ENCODE measurements at regions of chr10 and their contacts with region 1.

Region 1: GRCh38 chr10:72364239-72364777 is 9.6 kb upstream of the DNAJB12 start:
- DNase-seq: peak; percentile 78 to 93
- ATAC-seq: peak; percentile 97 to 100 (median 100)
- H3K4me3 ChIP-seq: no peak overlapping the region
- H3K4me3 Mint-ChIP-seq: peak overlapping the region; percentile 53
- H3K27ac ChIP-seq: peak overlapping the region; percentile 8
- H3K27ac Mint-ChIP-seq: peak overlapping the region in 1 of 2 donors; percentile 57
- H3K4me1 ChIP-seq: peaks cover 15% of the 10 kb centered on the region
- H3K4me1 Mint-ChIP-seq: peaks cover 20 to 23% of the 10 kb centered on the region in 2 donors
- H3K27me3 ChIP-seq: no peaks in the 10 kb centered on the region
- H3K27me3 Mint-ChIP-seq: peaks cover 7 to 8% of the 10 kb centered on the region in 2 donors
- CTCF ChIP-seq: peak; percentile 89

Region 2: DNA sequence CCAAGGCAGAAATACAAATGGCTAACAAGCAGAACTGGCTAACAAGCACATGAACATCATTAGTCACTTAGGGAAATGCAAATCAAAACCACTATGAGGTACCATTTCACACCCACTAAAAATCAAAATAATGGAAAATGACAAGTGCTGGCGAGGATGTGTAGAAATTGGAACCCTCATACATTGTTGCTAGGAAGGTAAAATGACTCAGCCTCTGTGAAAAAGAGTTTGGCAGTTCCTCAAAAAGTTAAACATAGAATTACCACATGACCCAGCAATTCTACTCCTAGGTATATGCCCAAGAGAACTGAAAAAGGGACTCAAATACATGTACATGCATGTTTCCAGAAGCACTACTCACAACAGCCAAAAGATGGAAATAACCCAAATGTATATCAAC is 201.3 kb before region 1 on chr10:
- intact Hi-C with region 1: no loop called
- DNase-seq: no peak
- ATAC-seq: no peak
- H3K4me3 ChIP-seq: no peak overlapping the region
- H3K4me3 Mint-ChIP-seq: no peak overlapping the region
- H3K27ac ChIP-seq: no peak overlapping the region
- H3K27ac Mint-ChIP-seq: no peak overlapping the region
- H3K4me1 ChIP-seq: no peaks in the 10 kb centered on the region
- H3K4me1 Mint-ChIP-seq: no peaks in the 10 kb centered on the region
- H3K27me3 ChIP-seq: no peaks in the 10 kb centered on the region
- H3K27me3 Mint-ChIP-seq: no peaks in the 10 kb centered on the region
- CTCF ChIP-seq: no peak

Region 3: DNA sequence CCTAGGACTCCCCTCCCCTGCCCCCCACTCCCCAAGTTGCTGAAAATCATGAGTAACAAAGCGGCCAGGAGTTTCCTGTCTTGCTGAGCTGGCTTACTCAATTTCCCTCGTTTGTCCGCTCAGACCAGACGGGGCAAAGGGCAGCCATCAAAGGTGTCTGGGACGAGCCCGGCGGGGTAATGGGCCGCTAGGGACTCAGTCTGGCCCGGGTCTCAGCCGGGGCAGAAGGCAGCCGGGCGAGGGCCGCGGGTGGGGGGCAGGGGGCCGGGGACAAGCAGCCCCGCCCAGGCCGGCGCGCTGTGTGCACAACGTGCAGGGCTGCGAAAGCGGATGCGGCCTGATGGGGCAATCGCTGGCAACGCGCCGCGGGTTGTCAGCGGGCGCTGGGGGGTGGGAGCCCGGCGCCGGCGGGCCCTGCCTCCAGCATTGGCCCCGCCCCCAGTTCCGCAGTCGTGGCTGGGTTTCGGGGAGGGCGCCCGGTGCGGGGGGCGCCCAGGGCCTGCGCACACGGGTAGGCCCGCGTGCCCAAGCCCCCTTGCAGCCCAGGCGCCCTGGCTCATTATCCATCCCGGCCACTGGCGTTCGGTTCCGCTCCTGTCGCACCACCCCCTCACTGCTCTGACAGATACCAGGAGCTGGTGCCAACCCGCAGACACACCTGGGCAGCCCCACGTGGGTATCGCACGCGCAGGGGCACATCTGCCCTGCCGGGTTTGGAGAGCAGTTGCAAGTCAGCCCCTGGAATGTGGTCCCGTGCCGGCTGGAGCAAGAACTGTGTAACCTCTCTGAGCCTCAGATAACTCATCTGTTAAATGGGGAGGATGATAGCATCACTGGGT is 44.7 kb before region 1 on chr10:
- intact Hi-C with region 1: no loop called
- DNase-seq: peak; percentile 89 to 95
- ATAC-seq: peak; percentile 68 to 87 (median 83)
- H3K4me3 ChIP-seq: peak overlapping the region; percentile 37
- H3K4me3 Mint-ChIP-seq: peak overlapping the region; percentile 75
- H3K27ac ChIP-seq: peak overlapping the region; percentile 95
- H3K27ac Mint-ChIP-seq: peak overlapping the region; percentile 85 to 97
- H3K4me1 ChIP-seq: peaks cover 85% of the 10 kb centered on the region
- H3K4me1 Mint-ChIP-seq: peaks cover 52 to 69% of the 10 kb centered on the region in 2 donors
- H3K27me3 ChIP-seq: no peaks in the 10 kb centered on the region
- H3K27me3 Mint-ChIP-seq: no peaks in the 10 kb centered on the region
- CTCF ChIP-seq: no peak

Region 4: DNA sequence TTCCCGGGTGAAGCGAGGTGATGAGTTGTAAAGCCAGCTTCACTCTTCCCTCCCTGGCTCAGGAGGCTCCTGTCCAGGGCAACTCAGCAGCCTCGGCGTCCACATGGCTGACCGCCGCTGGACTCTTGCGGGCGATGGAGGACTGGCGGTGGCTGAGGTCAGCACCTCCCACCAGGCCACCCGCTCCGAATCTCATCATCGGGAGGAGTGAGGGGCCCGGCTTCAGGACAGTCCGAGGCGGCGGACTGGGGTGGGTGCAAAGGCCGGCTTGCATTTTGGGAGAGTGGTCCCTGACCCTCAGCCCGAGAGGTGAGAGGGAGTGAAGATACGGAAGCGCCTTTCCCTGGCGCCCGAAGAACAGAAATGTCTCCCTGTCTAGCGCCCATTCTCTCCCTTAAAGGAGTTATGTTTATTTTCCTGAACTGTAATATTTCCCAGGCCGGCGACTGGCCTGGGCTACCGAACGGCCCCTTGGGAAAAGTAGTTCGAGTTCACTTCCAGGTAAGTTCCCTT is 10.3 kb before region 1 on chr10:
- intact Hi-C with region 1: no loop called
- DNase-seq: no peak
- ATAC-seq: peak; percentile 41 to 58 (median 49)
- H3K4me3 ChIP-seq: peak overlapping the region; percentile 80
- H3K4me3 Mint-ChIP-seq: peak overlapping the region; percentile 96
- H3K27ac ChIP-seq: peak overlapping the region; percentile 90
- H3K27ac Mint-ChIP-seq: peak overlapping the region; percentile 92 to 94
- H3K4me1 ChIP-seq: peaks cover 21% of the 10 kb centered on the region
- H3K4me1 Mint-ChIP-seq: peaks cover 42 to 53% of the 10 kb centered on the region in 2 donors
- H3K27me3 ChIP-seq: no peaks in the 10 kb centered on the region
- H3K27me3 Mint-ChIP-seq: no peaks in the 10 kb centered on the region
- CTCF ChIP-seq: no peak

Region 5: DNA sequence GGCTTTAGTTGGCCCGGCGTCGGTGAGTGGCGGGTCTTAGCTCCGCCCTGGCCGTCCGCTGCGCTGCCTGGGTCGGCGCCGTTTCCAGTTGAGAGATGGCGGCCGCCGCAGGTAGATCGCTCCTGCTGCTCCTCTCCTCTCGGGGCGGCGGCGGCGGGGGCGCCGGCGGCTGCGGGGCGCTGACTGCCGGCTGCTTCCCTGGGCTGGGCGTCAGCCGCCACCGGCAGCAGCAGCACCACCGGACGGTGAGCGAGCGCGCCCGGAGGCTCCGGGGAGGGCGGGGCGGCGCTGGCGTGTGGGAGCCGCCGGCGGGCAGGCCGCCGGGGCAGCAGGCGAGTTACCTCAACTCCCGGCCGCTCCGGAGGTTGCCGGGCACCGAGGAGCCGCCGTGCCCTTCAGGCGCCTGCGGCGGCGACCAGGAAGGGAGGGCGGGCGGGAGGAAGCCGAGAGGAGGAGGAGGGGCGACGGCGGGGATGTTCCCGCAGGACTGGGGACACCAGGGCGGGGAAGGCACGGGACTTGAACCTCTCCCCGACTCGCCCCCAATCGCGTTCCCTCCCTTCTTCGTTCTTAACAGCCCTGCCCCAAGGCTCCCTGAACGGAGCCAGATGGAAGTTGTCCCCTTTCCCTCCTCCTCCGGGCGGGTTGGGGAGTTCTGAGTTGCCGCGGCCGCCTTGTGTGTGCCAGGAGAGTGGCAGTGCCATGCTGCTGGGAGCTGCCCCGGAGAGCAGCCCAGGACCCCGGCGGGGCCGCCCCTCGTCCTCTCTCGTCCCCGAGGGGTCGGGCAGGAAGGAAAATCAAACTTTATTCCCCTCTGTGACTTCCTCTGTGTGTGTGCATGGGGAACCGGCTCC is 328.0 kb after region 1 on chr10 and contains the start of gene MCU:
- intact Hi-C with region 1: loop called (anchors 2 kb)
- DNase-seq: peak; percentile 86 to 96
- ATAC-seq: peak; percentile 97 to 99 (median 97)
- H3K4me3 ChIP-seq: peak within 1 kb of the TSS; percentile 90
- H3K4me3 Mint-ChIP-seq: peak within 1 kb of the TSS; percentile 86
- H3K27ac ChIP-seq: peak within 1 kb of the TSS; percentile 66
- H3K27ac Mint-ChIP-seq: peak within 1 kb of the TSS; percentile 66 to 80
- H3K4me1 ChIP-seq: peaks cover 7% of the 10 kb centered on the region
- H3K4me1 Mint-ChIP-seq: peaks cover 26 to 28% of the 10 kb centered on the region in 2 donors
- H3K27me3 ChIP-seq: no peaks in the 10 kb centered on the region
- H3K27me3 Mint-ChIP-seq: peaks cover 0 to 10% of the 10 kb centered on the region in 2 donors
- CTCF ChIP-seq: no peak
- total RNA-seq, gene MCU: 13.1 to 15.6 (median 14.1) TPM

Region 6: DNA sequence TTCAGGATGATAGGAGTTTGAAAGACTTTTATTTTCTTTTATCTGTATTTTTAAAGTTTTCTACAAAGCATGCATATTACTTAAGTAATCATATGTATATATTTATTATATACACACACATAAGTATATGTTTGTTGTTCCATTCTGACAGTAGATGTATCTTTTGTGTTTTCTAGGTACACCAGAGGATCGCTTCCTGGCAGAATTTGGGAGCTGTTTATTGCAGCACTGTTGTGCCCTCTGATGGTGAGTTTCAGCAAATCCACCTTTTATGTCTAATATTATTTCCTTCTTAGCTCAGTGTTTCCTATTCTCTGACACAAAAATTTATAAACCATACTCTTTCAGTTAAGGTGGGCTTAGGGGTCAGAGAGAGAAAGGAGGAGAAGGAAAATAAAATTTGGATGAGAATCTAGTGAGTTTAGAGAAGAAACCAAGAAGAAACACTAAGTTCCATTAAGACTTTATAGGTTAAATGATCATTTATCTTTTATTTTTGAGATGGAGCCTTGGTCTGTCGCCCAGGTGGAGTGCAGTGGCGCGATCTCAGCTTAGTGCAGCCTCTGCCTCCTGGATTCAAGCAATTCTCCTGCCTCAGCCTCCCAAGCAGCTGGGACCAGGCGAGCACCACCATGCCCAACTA is 470.0 kb after region 1 on chr10:
- intact Hi-C with region 1: loop called (anchors 1 kb)
- DNase-seq: peak in 1 of 2 donors; percentile 78
- ATAC-seq: peak; percentile 39 to 69 (median 64)
- H3K4me3 ChIP-seq: no peak overlapping the region
- H3K4me3 Mint-ChIP-seq: no peak overlapping the region
- H3K27ac ChIP-seq: no peak overlapping the region
- H3K27ac Mint-ChIP-seq: no peak overlapping the region
- H3K4me1 ChIP-seq: no peaks in the 10 kb centered on the region
- H3K4me1 Mint-ChIP-seq: peaks cover 0 to 3% of the 10 kb centered on the region in 2 donors
- H3K27me3 ChIP-seq: no peaks in the 10 kb centered on the region
- H3K27me3 Mint-ChIP-seq: no peaks in the 10 kb centered on the region
- CTCF ChIP-seq: peak; percentile 48

Region 7: DNA sequence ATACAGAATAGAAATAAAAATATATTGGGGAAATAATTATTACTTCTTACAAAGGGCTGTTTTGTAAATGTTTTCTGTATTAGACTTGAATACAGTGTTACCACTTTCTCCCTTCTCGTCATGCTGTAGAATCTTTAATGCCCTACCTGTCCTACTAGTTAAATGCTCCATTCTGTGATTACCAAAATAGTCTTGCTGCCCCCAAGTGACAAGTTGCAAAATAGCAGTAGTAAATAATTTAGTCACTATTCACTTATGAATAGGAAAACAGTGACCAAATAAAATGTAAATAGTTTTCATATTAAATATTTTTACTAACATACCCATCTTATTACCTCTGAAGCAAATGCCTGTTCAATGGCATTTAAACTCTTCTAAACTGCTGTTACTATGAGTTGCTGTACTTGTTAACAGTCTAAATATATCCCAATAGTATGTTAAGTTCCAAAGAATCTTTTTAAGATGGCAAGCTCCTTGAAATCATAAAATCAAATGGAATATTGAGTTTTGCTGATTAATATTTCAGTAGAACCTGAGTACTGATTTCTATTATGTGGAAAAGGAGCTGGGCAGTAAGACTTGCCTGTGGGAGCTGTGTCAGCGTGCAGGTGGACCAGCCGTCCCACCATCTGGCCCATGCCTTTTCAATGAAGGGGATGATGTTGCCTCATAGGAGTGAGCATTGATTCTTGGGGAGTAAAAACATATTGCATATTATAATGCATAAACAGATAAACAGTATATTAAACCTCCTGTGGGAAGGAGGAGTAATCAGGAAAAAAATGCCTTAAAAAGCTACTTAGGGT is 511.1 kb after region 1 on chr10:
- intact Hi-C with region 1: loop called (anchors 1 kb)
- DNase-seq: peak in 1 of 2 donors; percentile 52
- ATAC-seq: no peak
- H3K4me3 ChIP-seq: no peak overlapping the region
- H3K4me3 Mint-ChIP-seq: no peak overlapping the region
- H3K27ac ChIP-seq: no peak overlapping the region
- H3K27ac Mint-ChIP-seq: no peak overlapping the region
- H3K4me1 ChIP-seq: no peaks in the 10 kb centered on the region
- H3K4me1 Mint-ChIP-seq: no peaks in the 10 kb centered on the region
- H3K27me3 ChIP-seq: no peaks in the 10 kb centered on the region
- H3K27me3 Mint-ChIP-seq: no peaks in the 10 kb centered on the region
- CTCF ChIP-seq: peak; percentile 37

Region 8: DNA sequence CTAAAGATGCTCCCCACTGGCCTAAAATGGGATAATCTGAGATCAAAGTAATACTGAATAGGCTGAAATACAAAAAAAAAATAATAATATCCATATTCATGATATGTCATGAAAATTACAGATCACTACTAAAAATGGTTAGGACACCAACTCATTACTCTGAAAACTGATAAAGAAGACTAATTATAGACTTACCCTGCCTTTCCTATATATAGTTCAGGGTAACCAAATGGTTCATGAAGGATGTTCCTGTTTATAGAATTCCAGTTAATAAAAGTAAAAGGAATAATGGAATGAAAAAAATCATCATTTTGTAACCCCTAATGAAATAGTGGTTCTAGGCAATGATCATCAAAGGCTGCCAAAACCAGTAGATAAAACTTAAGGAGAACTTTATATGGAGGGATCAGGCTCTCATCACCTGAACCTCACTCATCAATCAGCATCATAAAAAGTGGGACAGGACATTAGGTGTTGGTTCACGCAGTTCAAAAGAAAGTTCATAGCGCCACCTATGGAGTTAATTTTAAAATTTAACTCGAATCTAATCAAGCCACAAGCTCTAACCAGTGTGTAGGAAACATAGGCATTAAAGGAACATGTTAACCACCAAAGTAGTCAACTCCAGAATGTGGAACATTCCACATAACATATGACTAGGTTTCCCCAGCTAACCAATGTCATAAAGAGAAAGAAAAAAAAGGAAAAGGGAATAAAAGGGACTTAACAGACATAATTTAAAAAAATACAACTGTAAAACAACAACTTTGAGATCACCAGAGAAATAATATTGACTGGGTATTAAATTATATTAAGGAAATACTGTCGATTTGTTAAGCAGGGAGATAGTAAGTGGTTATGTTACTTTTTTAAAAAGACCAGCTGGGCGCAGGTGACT is 696.7 kb after region 1 on chr10:
- intact Hi-C with region 1: loop called (anchors 1 kb)
- DNase-seq: peak in 1 of 2 donors; percentile 56
- ATAC-seq: peak in 1 of 3 donors; percentile 44
- H3K4me3 ChIP-seq: no peak overlapping the region
- H3K4me3 Mint-ChIP-seq: no peak overlapping the region
- H3K27ac ChIP-seq: no peak overlapping the region
- H3K27ac Mint-ChIP-seq: peak overlapping the region in 1 of 2 donors; percentile 1
- H3K4me1 ChIP-seq: no peaks in the 10 kb centered on the region
- H3K4me1 Mint-ChIP-seq: peaks cover 7 to 9% of the 10 kb centered on the region in 2 donors
- H3K27me3 ChIP-seq: no peaks in the 10 kb centered on the region
- H3K27me3 Mint-ChIP-seq: no peaks in the 10 kb centered on the region
- CTCF ChIP-seq: peak; percentile 48

Region 9: DNA sequence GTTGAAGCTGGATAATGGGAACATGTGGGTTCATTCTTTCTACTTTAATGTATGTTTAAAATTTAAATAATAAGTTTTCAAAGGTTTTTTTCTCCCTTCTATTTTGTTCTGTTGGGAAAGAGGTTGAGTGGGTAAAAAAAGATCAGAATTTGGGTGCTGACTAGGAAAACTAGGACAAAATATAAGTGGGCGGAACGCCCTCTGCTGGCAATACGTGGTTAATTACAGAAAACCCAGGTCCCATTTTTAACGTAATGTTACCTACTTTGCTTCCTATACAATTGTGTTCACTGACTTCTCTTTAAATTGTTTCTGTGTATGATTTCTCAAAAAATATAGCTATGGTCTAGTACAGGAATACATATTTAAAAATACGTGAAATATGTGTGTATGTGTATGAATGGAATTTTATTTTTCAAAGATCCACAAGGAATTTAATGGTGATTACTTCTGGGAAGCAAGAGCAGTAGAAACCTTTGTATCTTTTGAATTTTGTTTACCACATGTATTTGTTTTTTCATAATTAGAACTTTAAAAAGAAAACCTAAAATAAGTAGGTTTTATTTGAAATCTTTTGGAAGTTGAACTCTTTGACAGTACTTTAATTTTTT is 794.8 kb after region 1 on chr10:
- intact Hi-C with region 1: loop called (anchors 2 kb)
- DNase-seq: peak; percentile 30 to 80
- ATAC-seq: peak; percentile 67 to 81 (median 70)
- H3K4me3 ChIP-seq: no peak overlapping the region
- H3K4me3 Mint-ChIP-seq: no peak overlapping the region
- H3K27ac ChIP-seq: no peak overlapping the region
- H3K27ac Mint-ChIP-seq: no peak overlapping the region
- H3K4me1 ChIP-seq: no peaks in the 10 kb centered on the region
- H3K4me1 Mint-ChIP-seq: peaks cover 19 to 27% of the 10 kb centered on the region in 2 donors
- H3K27me3 ChIP-seq: no peaks in the 10 kb centered on the region
- H3K27me3 Mint-ChIP-seq: no peaks in the 10 kb centered on the region
- CTCF ChIP-seq: peak; percentile 88

Measured in natural killer cell (primary cell).